PC-9 (cell line): ENCODE measurements at regions of chr7 and their contacts with region 1.

Region 1: DNA sequence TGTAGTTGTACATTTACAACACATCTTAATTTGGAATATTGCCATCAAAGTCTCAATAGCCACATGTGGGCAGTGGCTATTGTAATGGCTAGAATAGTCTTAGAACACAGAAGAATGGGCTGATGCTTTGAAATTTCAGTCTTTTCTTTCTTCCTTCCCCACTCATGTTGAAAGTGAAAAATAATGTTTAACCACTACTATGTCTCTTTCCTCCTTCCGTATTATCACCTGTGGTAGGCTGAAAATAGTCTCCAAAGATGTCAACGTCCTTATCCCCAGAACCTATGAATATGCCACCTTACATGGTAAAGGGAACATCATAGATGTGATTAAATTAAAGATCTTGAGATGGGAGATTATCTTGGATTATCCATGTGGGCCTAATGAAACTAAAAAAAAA is 154.0 kb downstream of the SUGCT start:
- DNase-seq: no peak
- H3K4me3 ChIP-seq: no peak overlapping the region
- H3K27ac ChIP-seq: no peak overlapping the region
- H3K4me1 ChIP-seq: no peaks in the 10 kb centered on the region
- H3K27me3 ChIP-seq: no peaks in the 10 kb centered on the region
- CTCF ChIP-seq: no peak

Region 2: DNA sequence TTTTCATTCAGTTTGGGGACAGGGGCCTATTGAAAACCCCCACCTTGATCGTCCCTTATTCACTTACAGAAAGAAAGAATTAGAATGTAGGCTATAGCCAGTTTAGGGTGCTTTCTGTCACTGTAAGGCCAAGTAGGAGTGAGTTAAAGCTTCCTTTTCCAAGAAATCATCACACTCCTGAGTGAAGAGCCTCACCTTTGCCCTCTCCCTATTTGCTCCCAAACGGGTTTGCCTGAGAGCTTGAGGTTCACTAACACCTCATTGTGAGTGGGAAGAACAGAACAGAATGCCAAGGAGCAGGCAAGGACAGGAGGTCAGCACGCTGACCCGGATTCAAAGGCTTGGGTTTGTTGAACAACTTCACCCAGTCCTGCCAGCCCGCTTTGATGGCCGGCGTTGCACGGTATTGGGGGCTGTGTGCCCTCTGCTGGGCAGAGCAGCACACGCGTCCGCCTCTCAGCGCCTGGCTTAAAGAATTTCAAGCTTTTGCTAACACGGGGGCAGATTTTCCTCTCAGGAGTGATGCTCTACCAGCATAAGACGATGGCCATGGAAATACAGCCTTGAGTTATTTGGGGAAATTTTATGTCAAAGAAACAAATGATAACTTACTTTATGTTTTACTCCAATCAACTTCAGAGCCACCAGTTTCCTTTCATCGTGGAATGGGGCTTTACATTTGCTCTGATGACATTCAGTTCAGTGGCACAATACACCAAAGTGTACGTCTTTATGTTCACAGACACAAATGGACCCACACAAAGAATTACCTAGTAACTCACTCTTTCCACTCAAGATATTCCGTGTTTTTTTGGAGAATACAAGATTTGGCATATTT is 316.0 kb after region 1 on chr7:
- CTCF ChIA-PET with region 1: no interaction called
- POLR2A ChIA-PET with region 1: interaction called, 10 read pairs
- intact Hi-C with region 1: no loop called
- DNase-seq: no peak
- H3K4me3 ChIP-seq: no peak overlapping the region
- H3K27ac ChIP-seq: no peak overlapping the region
- H3K4me1 ChIP-seq: no peaks in the 10 kb centered on the region
- H3K27me3 ChIP-seq: no peaks in the 10 kb centered on the region
- CTCF ChIP-seq: no peak